IMR-90 (cell line): ENCODE measurements at regions of chr1 and their contacts with region 1.

Region 1: GRCh38 chr1:228131766-228132165 is 8.3 kb upstream of the GUK1 start:
- DNase-seq: no peak
- ATAC-seq: no peak
- H3K4me3 ChIP-seq: no peak overlapping the region
- H3K27ac ChIP-seq: no peak overlapping the region
- H3K4me1 ChIP-seq: no peaks in the 10 kb centered on the region
- H3K27me3 ChIP-seq: peaks cover 21% of the 10 kb centered on the region
- CTCF ChIP-seq: no peak
- POLR2A ChIP-seq: no peak
- RAD21 ChIP-seq: no peak

Region 2: GRCh38 chr1:226903819-226904716 is 1227.7 kb before region 1 on chr1:
- CTCF ChIA-PET with region 1: no interaction called
- POLR2A ChIA-PET with region 1: interaction called, 11 read pairs
- dilution Hi-C with region 1: no loop called
- in situ Hi-C with region 1: no loop called
- intact Hi-C with region 1: no loop called
- DNase-seq: peak; percentile 73
- ATAC-seq: peak; percentile 88
- H3K4me3 ChIP-seq: no peak overlapping the region
- H3K27ac ChIP-seq: no peak overlapping the region
- H3K4me1 ChIP-seq: peaks cover 4% of the 10 kb centered on the region; the same call in 1 of the 2 replicates
- H3K27me3 ChIP-seq: no peaks in the 10 kb centered on the region
- CTCF ChIP-seq: no peak
- POLR2A ChIP-seq: no peak
- RAD21 ChIP-seq: no peak

Region 3: GRCh38 chr1:228393248-228393699 is 261.5 kb after region 1 on chr1:
- CTCF ChIA-PET with region 1: no interaction called
- POLR2A ChIA-PET with region 1: no interaction called
- dilution Hi-C with region 1: no loop called
- in situ Hi-C with region 1: no loop called
- intact Hi-C with region 1: loop called (anchors 5 kb)
- DNase-seq: peak; percentile 73
- ATAC-seq: peak; percentile 90
- H3K4me3 ChIP-seq: no peak overlapping the region
- H3K27ac ChIP-seq: peak overlapping the region; percentile 39; the same call in 1 of the 2 replicates
- H3K4me1 ChIP-seq: peaks cover 20% of the 10 kb centered on the region
- H3K27me3 ChIP-seq: no peaks in the 10 kb centered on the region
- CTCF ChIP-seq: peak; percentile 60
- POLR2A ChIP-seq: no peak
- RAD21 ChIP-seq: peak; percentile 46

Region 4: DNA sequence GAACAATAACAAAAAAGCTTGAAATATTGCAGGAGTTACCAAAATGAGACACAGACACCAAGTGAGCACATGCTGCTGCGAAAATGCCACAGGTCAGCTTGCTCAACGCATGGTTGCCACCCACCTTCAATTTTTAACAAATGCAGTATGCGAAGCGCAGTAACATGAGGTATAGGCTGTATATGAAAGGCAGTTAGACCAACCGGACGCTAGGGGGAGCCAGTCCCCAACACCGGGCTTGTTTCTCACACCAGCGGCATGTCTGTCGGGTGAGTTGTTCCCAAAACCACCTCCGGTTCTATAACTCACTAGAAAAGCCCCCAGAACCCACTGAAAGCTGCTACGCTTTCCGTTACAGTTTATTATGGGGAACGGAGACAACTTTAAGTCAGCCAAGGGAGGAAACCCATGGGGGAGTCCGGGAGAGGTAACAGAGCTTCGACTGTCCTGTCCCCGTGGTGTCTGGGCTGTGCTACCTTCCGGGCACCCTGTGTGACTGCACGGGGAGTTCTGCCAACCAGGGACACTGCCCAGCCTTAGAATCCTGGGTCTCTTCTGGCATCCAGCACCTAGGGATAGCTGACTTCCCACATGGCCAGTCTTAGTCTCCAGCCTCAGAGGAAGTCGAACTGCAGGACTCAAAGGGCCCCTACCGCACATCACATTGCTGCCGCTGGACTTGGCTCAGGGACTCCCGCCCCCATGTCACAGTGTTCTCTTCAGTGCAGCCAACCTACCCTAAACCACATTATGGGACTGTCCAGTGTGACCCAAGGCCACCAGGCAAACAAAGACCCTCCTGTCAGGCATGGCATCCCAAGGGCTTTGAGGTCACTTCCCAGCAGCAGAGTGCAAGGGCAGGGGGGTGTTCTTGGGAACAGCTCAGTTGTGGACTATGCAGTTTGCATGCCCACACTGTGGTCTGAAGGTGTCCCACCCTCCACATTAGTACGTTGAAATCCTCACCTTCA is 369.4 kb after region 1 on chr1:
- CTCF ChIA-PET with region 1: no interaction called
- POLR2A ChIA-PET with region 1: no interaction called
- dilution Hi-C with region 1: no loop called
- in situ Hi-C with region 1: loop called (anchors 10 kb)
- intact Hi-C with region 1: loop called (anchors 5 kb)
- DNase-seq: peak; percentile 86
- ATAC-seq: peak; percentile 98
- H3K4me3 ChIP-seq: no peak overlapping the region
- H3K27ac ChIP-seq: no peak overlapping the region
- H3K4me1 ChIP-seq: no peaks in the 10 kb centered on the region
- H3K27me3 ChIP-seq: peaks cover 3% of the 10 kb centered on the region; the same call in 1 of the 2 replicates
- CTCF ChIP-seq: peak; percentile 92
- POLR2A ChIP-seq: 0 out of 2 replicates have a peak, but pooled peaks have one; percentile 26
- RAD21 ChIP-seq: peak; percentile 77

Region 5: GRCh38 chr1:228515200-228515834 is 383.6 kb after region 1 on chr1:
- CTCF ChIA-PET with region 1: no interaction called
- POLR2A ChIA-PET with region 1: no interaction called
- dilution Hi-C with region 1: no loop called
- in situ Hi-C with region 1: no loop called
- intact Hi-C with region 1: loop called (anchors 1 kb)
- DNase-seq: peak; percentile 58
- ATAC-seq: peak; percentile 74
- H3K4me3 ChIP-seq: no peak overlapping the region
- H3K27ac ChIP-seq: no peak overlapping the region
- H3K4me1 ChIP-seq: no peaks in the 10 kb centered on the region
- H3K27me3 ChIP-seq: peaks cover 38% of the 10 kb centered on the region
- CTCF ChIP-seq: peak; percentile 83
- POLR2A ChIP-seq: no peak
- RAD21 ChIP-seq: peak; percentile 89